ENCODE measurements at regions of chr1 and their contacts with region 1.

Region 1: DNA sequence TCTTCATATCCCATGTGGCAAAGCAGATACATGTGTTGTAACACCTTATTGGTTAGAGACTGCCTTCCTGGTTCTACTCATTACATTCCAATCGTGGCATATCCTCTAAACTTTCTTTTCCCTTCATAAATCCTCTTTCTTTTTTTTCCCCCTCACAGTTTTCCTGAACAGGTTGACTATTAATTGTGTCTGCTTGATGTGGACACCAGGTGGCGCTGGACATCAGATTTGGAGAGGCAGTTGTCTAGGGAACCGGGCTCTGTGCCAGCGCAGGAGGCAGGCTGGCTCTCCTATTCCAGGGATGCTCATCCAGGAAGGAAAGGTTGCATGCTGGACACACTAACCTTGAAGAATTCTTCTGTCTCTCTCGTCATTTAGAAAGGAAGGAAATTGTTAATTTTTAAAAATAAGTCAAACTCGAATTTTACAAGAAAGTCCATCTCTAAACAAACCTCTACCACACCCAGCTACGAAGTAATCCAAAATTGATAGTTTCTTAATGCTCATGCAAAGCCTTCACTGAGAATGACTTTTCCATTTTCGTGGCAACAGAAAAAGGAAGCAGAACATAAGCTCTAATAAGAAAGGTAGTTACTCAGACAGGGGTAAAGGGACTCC is 59.4 kb upstream of the ASB17 start:
- DNase-seq: peak; percentile 73
- ATAC-seq: peak; percentile 57
- H3K4me3 ChIP-seq: no peak overlapping the region
- H3K4me3 Mint-ChIP-seq: no peak overlapping the region
- H3K27ac ChIP-seq: no peak overlapping the region
- H3K27ac Mint-ChIP-seq: no peak overlapping the region
- H3K4me1 ChIP-seq: no peaks in the 10 kb centered on the region
- H3K4me1 Mint-ChIP-seq: no peaks in the 10 kb centered on the region
- H3K27me3 ChIP-seq: peaks cover 0 to 10% (median 3%) of the 10 kb centered on the region in 4 experiments
- H3K27me3 Mint-ChIP-seq: no peaks in the 10 kb centered on the region
- CTCF ChIP-seq: peak; percentile 89

Region 2: GRCh38 chr1:75980972-75981897 is 10.4 kb before region 1 on chr1:
- CTCF ChIA-PET with region 1: interaction called, 10 read pairs
- POLR2A ChIA-PET with region 1: no interaction called
- intact Hi-C with region 1: no loop called
- DNase-seq: no peak
- ATAC-seq: no peak
- H3K4me3 ChIP-seq: no peak overlapping the region
- H3K4me3 Mint-ChIP-seq: no peak overlapping the region
- H3K27ac ChIP-seq: no peak overlapping the region
- H3K27ac Mint-ChIP-seq: no peak overlapping the region
- H3K4me1 ChIP-seq: no peaks in the 10 kb centered on the region
- H3K4me1 Mint-ChIP-seq: no peaks in the 10 kb centered on the region
- H3K27me3 ChIP-seq: no peaks in the 10 kb centered on the region
- H3K27me3 Mint-ChIP-seq: peaks cover 15% of the 10 kb centered on the region
- CTCF ChIP-seq: no peak

Region 3: DNA sequence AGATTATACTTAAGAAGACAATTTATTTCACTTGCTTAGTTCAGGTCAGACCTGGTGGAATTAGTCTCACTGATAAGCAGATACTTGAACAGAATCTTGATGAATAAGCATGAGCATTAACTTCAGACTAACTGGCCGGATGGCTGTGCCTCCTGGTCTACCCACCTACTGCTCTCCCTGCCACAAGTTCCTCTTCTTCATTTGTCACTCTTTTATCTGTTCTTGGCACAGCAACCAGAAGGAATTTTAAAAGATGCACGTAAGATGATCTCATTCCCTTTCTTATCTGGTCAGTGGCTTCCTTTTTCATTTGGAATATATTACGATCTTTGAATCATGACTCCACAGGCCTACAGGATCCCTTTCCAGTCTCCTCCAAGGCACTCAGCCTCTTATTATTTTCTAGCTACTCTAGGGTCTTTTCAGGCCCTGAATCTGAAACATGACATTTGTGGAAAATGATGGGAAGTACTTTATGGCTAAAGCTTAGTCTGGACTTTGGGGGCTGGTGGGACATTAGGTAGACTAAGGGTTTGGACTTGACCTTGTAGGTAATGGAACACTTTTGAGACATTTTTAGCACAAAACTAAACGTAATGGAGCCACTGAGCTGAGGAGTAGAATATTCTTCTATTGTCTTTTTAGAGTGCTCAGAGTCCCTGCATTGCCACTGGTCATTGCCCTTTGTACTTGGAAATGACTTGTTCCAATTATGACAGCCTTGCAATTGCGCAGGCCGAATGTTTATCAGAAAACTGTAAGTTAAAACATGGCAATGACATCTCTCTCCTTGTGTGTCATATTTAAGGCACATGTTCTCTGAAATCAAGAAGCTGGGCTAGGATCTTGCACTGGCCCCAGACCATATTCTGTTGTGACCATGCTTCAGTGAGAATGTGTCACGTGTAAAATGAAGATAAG is 98.9 kb after region 1 on chr1:
- CTCF ChIA-PET with region 1: no interaction called
- POLR2A ChIA-PET with region 1: no interaction called
- intact Hi-C with region 1: loop called (anchors 10 kb)
- DNase-seq: no peak
- ATAC-seq: no peak
- H3K4me3 ChIP-seq: no peak overlapping the region
- H3K4me3 Mint-ChIP-seq: no peak overlapping the region
- H3K27ac ChIP-seq: no peak overlapping the region
- H3K27ac Mint-ChIP-seq: no peak overlapping the region
- H3K4me1 ChIP-seq: peaks cover 0 to 9% of the 10 kb centered on the region in 2 donors
- H3K4me1 Mint-ChIP-seq: peaks cover 12% of the 10 kb centered on the region
- H3K27me3 ChIP-seq: no peaks in the 10 kb centered on the region
- H3K27me3 Mint-ChIP-seq: no peaks in the 10 kb centered on the region
- CTCF ChIP-seq: no peak

Region 4: DNA sequence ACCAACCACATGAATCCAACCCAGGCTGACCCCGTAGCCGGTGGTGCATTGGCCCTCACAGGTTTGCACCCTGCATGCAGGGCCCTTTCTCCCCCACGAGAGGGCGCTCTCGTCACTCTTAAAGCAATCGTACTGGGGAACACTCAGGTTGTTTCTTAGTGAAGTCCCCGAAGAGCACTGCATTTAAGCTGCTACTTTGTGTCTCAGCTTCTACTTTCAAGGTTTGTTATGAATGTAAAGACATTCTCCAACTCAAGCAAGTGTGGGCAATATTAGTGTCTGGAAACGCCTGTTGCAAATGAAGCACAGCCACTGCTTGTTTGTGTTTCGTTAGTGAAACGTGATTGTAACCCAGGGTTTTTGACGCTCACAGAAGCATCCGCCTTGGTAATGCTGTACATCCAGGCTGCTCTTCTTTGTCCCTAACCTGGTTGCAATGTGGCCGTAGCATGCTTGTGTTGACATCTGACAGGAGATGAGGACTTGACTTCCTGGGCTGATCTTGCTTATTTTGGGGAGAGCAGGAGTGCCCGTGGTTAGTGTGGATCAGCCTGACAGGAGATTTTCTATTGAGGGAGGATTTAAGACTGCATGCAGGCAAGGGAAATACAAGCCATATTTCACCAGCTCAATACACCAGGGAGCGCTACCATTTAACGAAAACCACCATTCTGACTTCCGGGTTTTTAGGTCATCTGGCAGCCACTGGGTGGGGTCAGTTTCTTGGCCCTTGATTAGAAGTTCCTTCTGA is 162.8 kb after region 1 on chr1:
- CTCF ChIA-PET with region 1: interaction called, 20 read pairs
- POLR2A ChIA-PET with region 1: no interaction called
- intact Hi-C with region 1: loop called (anchors 1 kb)
- DNase-seq: peak; percentile 80
- ATAC-seq: peak; percentile 88
- H3K4me3 ChIP-seq: peak overlapping the region; percentile 39 to 62 (median 58)
- H3K4me3 Mint-ChIP-seq: peak overlapping the region; percentile 92
- H3K27ac ChIP-seq: peak overlapping the region; percentile 2 to 54
- H3K27ac Mint-ChIP-seq: peak overlapping the region; percentile 79
- H3K4me1 ChIP-seq: peaks cover 7 to 8% of the 10 kb centered on the region in 2 donors
- H3K4me1 Mint-ChIP-seq: peaks cover 15% of the 10 kb centered on the region
- H3K27me3 ChIP-seq: no peaks in the 10 kb centered on the region
- H3K27me3 Mint-ChIP-seq: peaks cover 3% of the 10 kb centered on the region
- CTCF ChIP-seq: peak; percentile 98

Region 5: DNA sequence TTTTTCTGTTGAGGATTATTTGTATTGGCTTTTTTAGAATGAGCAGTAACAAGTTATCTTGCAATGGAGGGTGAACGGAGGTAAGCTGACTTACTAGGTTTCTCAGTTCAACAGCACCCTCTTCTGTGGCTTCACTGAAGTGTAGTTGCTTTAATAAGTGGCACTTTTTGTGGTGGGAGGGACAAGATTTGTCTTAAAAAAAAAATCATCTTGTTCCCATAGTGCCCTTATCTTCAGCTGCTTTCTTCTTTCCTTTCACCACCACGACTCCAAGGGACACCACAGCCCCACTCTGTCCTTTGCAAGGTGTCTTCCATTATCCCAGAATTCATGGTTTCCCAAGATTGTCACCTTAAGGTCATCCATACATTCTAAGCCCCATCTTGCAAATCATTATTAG is 1134.7 kb after region 1 on chr1:
- CTCF ChIA-PET with region 1: no interaction called
- POLR2A ChIA-PET with region 1: no interaction called
- intact Hi-C with region 1: loop called (anchors 1 kb)
- DNase-seq: peak; percentile 17
- ATAC-seq: no peak
- H3K4me3 ChIP-seq: no peak overlapping the region
- H3K4me3 Mint-ChIP-seq: no peak overlapping the region
- H3K27ac ChIP-seq: no peak overlapping the region
- H3K27ac Mint-ChIP-seq: no peak overlapping the region
- H3K4me1 ChIP-seq: no peaks in the 10 kb centered on the region
- H3K4me1 Mint-ChIP-seq: no peaks in the 10 kb centered on the region
- H3K27me3 ChIP-seq: no peaks in the 10 kb centered on the region
- H3K27me3 Mint-ChIP-seq: no peaks in the 10 kb centered on the region
- CTCF ChIP-seq: peak; percentile 15

Region 6: GRCh38 chr1:77533660-77534305 is 1542.2 kb after region 1 on chr1:
- CTCF ChIA-PET with region 1: no interaction called
- POLR2A ChIA-PET with region 1: no interaction called
- intact Hi-C with region 1: loop called (anchors 5 kb)
- DNase-seq: peak; percentile 61
- ATAC-seq: no peak
- H3K4me3 ChIP-seq: no peak overlapping the region
- H3K4me3 Mint-ChIP-seq: no peak overlapping the region
- H3K27ac ChIP-seq: no peak overlapping the region
- H3K27ac Mint-ChIP-seq: no peak overlapping the region
- H3K4me1 ChIP-seq: peaks cover 0 to 3% of the 10 kb centered on the region in 2 donors
- H3K4me1 Mint-ChIP-seq: no peaks in the 10 kb centered on the region
- H3K27me3 ChIP-seq: peaks cover 0 to 3% (median 0%) of the 10 kb centered on the region in 4 experiments
- H3K27me3 Mint-ChIP-seq: peaks cover 10% of the 10 kb centered on the region
- CTCF ChIP-seq: peak; percentile 89

Measured in B cell (primary cell).